Endothelial cell of umbilical vein (primary cell): ENCODE measurements at regions of chr16 and their contacts with region 1.

Region 1: DNA sequence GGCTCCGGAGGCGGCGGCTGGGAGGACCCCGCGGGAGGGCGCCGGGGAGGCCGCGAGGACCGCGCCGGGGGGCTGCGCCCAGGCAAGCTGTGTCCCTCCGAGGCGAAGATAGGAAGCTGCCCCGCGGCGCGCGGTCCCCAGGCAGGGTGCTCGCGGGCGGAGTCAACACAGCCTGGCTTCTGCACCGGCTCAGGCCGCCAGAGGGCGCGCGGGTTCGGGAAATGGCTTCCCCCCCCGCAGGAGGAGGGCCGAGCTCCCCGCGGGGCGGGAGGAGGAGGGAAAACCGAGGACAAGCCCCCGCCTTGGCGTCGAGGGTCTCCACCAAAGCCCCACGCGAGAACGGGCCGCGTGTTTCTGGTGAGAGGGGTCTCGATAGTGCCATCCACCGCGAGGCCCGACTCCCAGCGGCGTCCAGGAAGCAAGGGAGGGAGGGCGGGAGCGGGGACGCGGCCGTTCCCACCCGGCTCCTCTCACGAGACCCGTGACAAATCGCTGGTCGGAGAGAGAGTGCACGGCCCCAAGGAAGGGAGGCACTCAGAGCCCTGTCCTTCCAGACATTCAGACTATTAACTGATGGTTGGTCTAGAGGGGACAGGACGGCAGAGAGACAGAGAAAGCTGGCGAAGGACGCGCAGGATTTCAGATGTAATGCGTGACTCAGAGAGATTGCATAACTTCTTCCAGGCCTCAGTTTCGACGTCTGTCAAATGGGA is 64.4 kb upstream of the DNAJA2 start:
- DNase-seq: peak; percentile 76
- H3K4me3 ChIP-seq: peak overlapping the region; percentile 36 to 64 (median 38)
- H3K27ac ChIP-seq: no peak overlapping the region
- H3K4me1 ChIP-seq: no peaks in the 10 kb centered on the region
- H3K27me3 ChIP-seq: peaks cover 0 to 2% of the 10 kb centered on the region in 2 experiments
- CTCF ChIP-seq: peak; percentile 92 to 95
- POLR2A ChIP-seq: no peak

Region 2: GRCh38 chr16:46728806-46729205 is 309.1 kb before region 1 on chr16:
- CTCF ChIA-PET with region 1: no interaction called
- POLR2A ChIA-PET with region 1: no interaction called
- dilution Hi-C with region 1: no loop called
- intact Hi-C with region 1: no loop called
- DNase-seq: no peak
- H3K4me3 ChIP-seq: no peak overlapping the region
- H3K27ac ChIP-seq: no peak overlapping the region
- H3K4me1 ChIP-seq: no peaks in the 10 kb centered on the region
- H3K27me3 ChIP-seq: no peaks in the 10 kb centered on the region
- CTCF ChIP-seq: no peak
- POLR2A ChIP-seq: no peak

Region 3: DNA sequence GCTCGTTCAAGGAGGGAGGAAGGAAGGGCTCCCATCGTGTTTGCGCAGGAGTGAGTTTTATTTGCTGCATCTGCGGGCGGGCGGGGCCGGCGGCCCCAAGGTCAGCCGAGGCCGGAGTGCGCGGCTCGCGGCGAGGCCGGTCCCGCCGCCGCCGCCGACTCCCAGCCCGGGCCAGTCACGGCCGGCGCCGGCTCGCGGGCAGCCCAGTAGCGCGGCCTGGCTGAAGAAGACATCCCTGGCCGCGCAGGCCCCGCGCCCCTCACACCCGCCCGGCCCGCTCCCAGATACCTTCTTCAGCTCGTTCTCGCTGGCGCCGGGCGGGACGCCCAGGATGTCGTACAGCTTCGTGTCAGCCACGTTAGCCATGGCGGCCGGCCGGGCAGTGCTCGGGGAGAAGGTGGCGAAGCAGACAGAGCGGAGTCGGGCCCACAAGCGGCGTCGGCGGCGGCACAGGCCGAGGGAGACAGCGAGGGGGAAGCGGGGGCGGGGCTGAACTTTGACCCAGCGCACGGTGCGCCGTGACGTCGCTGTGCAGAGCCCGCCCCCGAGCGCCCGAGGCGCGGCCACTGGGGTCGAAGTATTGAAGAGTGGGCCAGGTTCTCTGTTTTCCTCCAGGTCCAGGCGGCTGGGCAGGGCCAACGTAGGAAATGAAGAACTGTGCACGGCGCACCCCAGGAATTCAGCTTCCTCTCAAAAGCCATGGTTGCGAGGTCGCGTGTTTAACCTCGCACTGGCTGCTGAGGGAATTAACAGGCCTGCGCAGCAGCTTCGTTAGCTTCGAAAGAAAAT is 64.5 kb before region 1 on chr16 and contains the start of gene DNAJA2:
- CTCF ChIA-PET with region 1: interaction called, 11 read pairs
- POLR2A ChIA-PET with region 1: interaction called, 6 read pairs
- dilution Hi-C with region 1: no loop called
- intact Hi-C with region 1: loop called (anchors 1 kb)
- DNase-seq: peak; percentile 91
- H3K4me3 ChIP-seq: peak within 1 kb of the TSS; percentile 76 to 94 (median 89)
- H3K27ac ChIP-seq: peak within 1 kb of the TSS; percentile 18
- H3K4me1 ChIP-seq: peaks cover 19% of the 10 kb centered on the region
- H3K27me3 ChIP-seq: no peaks in the 10 kb centered on the region
- CTCF ChIP-seq: no peak
- POLR2A ChIP-seq: peak; percentile 91
- total RNA-seq, gene DNAJA2: 57.5 and 61.4 TPM in 2 replicates

Region 4: GRCh38 chr16:47018223-47018891 is 19.5 kb before region 1 on chr16:
- CTCF ChIA-PET with region 1: interaction called, 10 read pairs
- POLR2A ChIA-PET with region 1: no interaction called
- dilution Hi-C with region 1: no loop called
- intact Hi-C with region 1: no loop called
- DNase-seq: peak; percentile 13
- H3K4me3 ChIP-seq: no peak overlapping the region
- H3K27ac ChIP-seq: no peak overlapping the region
- H3K4me1 ChIP-seq: no peaks in the 10 kb centered on the region
- H3K27me3 ChIP-seq: no peaks in the 10 kb centered on the region
- CTCF ChIP-seq: peak in 1 of 2 donors; percentile 33
- POLR2A ChIP-seq: no peak

Region 5: GRCh38 chr16:47136101-47136820 is 98.4 kb after region 1 on chr16:
- CTCF ChIA-PET with region 1: interaction called, 192 read pairs
- POLR2A ChIA-PET with region 1: interaction called, 6 read pairs
- dilution Hi-C with region 1: no loop called
- intact Hi-C with region 1: loop called (anchors 1 kb)
- DNase-seq: peak; percentile 91
- H3K4me3 ChIP-seq: peak overlapping the region in 1 of 3 experiments; percentile 24
- H3K27ac ChIP-seq: peak overlapping the region; percentile 92
- H3K4me1 ChIP-seq: peaks cover 33% of the 10 kb centered on the region
- H3K27me3 ChIP-seq: no peaks in the 10 kb centered on the region
- CTCF ChIP-seq: no peak
- POLR2A ChIP-seq: no peak

Region 6: DNA sequence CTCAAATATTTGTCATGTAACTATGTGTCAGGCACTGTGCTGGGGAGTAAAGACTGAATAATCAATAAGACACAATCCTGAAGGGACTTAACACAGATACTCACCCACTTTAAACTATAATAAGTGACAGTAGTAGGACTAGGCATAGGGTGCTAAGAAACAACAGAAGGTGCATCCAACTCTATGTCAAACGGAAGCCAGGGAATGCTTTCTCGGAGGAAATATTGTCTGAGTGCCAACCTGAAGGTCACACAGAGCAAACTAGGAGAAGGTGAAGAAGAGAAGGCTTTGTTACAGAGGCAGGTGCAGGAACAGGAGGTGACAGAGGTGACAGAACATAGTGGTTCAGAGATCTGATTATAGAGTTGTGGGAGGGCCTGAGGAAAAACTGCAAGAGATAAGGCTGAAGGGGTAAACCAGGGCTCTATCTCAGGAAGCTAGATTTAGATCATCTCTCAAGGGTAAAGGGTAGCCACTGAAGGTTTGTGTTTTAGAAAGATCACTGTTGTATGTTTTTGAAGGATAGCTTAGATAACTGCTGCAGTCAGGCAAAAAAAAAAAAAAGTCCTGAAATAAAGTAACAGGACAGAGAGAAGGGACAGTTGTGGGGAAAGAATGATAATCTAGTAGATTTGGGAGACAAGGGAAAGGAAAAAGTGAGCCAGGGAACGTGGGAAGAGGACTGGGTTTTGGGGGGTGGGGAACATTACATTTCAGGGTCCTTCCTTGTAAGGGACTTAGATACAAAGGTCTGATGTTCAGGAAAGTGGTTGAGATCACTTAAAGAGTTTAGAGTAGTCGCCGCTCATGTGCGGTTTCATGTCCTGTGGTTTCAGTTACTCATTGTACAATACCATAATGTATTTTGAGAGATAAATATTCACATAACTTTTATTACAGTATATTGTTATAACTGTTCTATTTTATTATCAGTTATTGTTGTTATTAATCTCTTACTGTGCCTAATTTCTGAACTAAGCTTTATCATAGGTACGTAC is 191.4 kb after region 1 on chr16:
- CTCF ChIA-PET with region 1: no interaction called
- POLR2A ChIA-PET with region 1: no interaction called
- dilution Hi-C with region 1: no loop called
- intact Hi-C with region 1: no loop called
- DNase-seq: peak; percentile 2
- H3K4me3 ChIP-seq: no peak overlapping the region
- H3K27ac ChIP-seq: no peak overlapping the region
- H3K4me1 ChIP-seq: no peaks in the 10 kb centered on the region
- H3K27me3 ChIP-seq: no peaks in the 10 kb centered on the region
- CTCF ChIP-seq: no peak
- POLR2A ChIP-seq: no peak

Region 7: GRCh38 chr16:48054881-48055601 is 1017.1 kb after region 1 on chr16:
- CTCF ChIA-PET with region 1: interaction called, 40 read pairs
- POLR2A ChIA-PET with region 1: no interaction called
- dilution Hi-C with region 1: no loop called
- intact Hi-C with region 1: loop called (anchors 1 kb)
- DNase-seq: peak; percentile 45
- H3K4me3 ChIP-seq: no peak overlapping the region
- H3K27ac ChIP-seq: no peak overlapping the region
- H3K4me1 ChIP-seq: no peaks in the 10 kb centered on the region
- H3K27me3 ChIP-seq: peaks cover 0 to 2% of the 10 kb centered on the region in 2 experiments
- CTCF ChIP-seq: peak; percentile 76 to 87
- POLR2A ChIP-seq: no peak